ENCODE measurements at regions of chr5 and their contacts with region 1.

Region 1: GRCh38 chr5:68745448-68745847 is 348.4 kb upstream of the SLC30A5 start:
- DNase-seq: peak in 1 of 2 experiments; percentile 10
- H3K4me3 ChIP-seq: no peak overlapping the region
- H3K27ac ChIP-seq: no peak overlapping the region
- H3K4me1 ChIP-seq: no peaks in the 10 kb centered on the region
- H3K27me3 ChIP-seq: no peaks in the 10 kb centered on the region
- CTCF ChIP-seq: 0 out of 2 replicates have a peak, but pooled peaks have one; percentile 22

Region 2: GRCh38 chr5:68277431-68277830 is 468.0 kb before region 1 on chr5:
- CTCF ChIA-PET with region 1: no interaction called
- POLR2A ChIA-PET with region 1: no interaction called
- intact Hi-C with region 1: loop called (anchors 5 kb)
- DNase-seq: peak; percentile 57 to 77
- H3K4me3 ChIP-seq: no peak overlapping the region
- H3K27ac ChIP-seq: peak overlapping the region; percentile 50
- H3K4me1 ChIP-seq: peaks cover 17% of the 10 kb centered on the region
- H3K27me3 ChIP-seq: no peaks in the 10 kb centered on the region
- CTCF ChIP-seq: no peak

Region 3: DNA sequence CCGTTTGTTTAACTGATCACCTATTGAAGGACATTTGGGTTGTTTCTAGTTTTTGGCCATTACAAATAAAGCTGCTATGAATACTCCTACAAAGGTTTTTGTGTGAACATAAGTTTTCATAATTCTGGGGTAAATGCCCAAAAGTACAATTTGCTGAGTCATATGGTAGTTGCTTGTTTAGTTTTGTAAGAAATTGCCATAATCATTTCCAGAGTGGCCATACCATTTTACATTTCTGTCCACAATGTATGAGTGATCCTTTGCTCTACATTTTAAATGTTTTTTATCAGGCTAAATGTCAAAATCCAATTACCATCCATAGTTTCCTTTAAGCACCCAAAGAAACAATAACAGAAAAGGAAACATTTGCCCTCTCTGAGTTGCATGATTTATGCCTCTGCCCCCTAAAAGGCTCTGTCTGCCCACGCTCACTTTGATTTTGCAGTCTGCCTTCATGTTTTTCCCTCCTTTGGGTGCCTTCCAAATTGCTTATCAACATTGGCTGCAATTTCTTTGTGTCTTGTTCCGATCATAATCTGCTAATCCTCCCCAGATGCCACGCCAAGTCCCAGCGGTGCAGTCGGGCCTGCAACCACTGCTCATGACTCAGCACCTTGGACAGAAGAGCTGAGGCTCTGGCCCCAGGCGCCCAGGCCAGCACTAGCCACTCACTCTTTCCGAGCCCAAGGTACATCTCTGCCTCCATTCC is 190.7 kb before region 1 on chr5:
- CTCF ChIA-PET with region 1: no interaction called
- POLR2A ChIA-PET with region 1: no interaction called
- intact Hi-C with region 1: loop called (anchors 10 kb)
- DNase-seq: peak in 1 of 2 experiments; percentile 69
- H3K4me3 ChIP-seq: no peak overlapping the region
- H3K27ac ChIP-seq: no peak overlapping the region
- H3K4me1 ChIP-seq: peaks cover 37% of the 10 kb centered on the region
- H3K27me3 ChIP-seq: no peaks in the 10 kb centered on the region
- CTCF ChIP-seq: no peak

Region 4: DNA sequence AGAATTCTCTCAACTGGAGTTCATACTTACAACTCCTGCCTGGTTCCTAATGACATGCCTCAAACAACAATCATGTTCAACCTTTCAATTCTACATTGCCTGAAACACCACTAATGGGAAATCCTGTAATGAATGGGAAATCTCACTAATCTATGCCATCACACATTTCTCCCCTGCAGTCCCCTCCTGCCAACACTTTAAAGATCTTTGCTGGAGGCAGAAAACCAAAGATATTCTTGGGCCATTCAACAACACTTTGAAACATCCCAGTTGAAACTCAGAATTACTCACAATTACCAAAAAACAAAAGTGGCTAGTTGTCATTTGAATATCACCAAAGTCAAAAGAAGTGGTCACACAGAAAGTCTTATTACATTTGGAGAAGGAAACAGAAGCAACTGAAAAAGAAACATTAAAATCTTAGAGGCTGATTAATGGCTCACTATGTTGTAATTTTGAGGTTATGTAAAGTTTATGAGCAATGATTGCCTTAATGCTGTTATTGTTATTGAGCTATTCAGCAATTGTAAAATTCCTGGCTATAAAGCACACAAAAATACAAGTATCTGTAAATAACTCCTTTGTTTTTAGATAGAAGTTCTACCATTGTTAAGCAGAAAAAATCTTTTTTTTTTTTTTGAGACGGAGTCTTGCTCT is 35.0 kb after region 1 on chr5:
- CTCF ChIA-PET with region 1: no interaction called
- POLR2A ChIA-PET with region 1: no interaction called
- intact Hi-C with region 1: no loop called
- DNase-seq: no peak
- H3K4me3 ChIP-seq: no peak overlapping the region
- H3K27ac ChIP-seq: no peak overlapping the region
- H3K4me1 ChIP-seq: no peaks in the 10 kb centered on the region
- H3K27me3 ChIP-seq: no peaks in the 10 kb centered on the region
- CTCF ChIP-seq: no peak